ENCODE measurements at regions of chr1 and their contacts with region 1.

Region 1: DNA sequence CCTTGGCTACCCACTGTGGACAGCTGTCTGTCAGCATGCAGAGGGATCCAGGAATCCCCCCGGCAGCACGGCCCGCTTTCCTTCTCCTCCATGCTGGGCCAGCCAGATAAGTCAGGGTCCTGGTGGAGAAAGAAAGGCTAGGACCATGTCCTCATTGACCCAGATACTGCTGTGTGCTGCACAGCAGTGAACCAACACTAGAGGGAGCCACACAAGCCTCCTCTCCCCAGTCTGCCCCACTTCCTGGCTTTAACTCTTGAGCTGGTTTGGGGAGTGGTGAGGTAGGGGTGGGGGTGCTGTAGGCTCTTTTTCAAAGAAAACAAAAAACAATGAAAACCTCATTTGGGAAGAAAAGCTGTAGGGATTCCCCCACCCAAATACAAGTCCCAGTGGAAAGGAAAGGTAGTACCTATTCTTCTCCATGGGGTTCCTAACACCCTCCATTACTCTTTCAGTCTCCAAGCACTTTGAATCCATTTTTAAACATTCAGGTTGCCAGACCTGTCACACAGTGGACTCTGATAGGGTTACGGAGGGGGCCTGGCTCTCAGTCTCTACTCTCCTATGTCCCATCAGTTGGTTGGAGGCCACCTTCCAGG is 84.9 kb upstream of the CD1D start:
- ATAC-seq: peak in 3 of 8 experiments; percentile 81 to 89 (median 82)
- H3K4me3 ChIP-seq: no peak overlapping the region
- H3K27ac ChIP-seq: no peak overlapping the region
- H3K4me1 ChIP-seq: peaks cover 24 to 35% of the 10 kb centered on the region in 2 donors

Region 2: DNA sequence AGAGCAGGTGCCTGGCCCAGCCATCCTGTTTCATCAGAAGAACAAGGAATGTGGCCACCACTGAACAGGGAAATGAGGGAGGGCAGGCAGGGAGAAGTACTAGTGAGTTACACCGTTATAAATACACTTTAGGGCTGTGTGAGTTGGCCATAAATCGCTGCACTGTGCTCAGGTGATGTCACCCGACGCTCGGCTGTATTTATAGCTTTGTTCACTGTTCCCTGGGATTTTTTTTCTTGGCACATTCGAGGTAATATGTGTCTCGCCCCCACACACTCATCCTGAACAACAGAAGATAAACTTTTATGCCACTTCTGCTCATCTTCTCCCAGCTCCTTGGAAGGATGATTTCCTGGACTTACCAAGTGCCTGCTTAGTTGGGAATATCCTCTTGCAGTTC is 111.4 kb before region 1 on chr1:
- in situ Hi-C with region 1: loop called in 4 of 9 experiments (anchors 10 to 25 kb)
- ATAC-seq: peak in 5 of 8 experiments; percentile 99 to 100 (median 100)
- H3K4me3 ChIP-seq: no peak overlapping the region
- H3K27ac ChIP-seq: no peak overlapping the region
- H3K4me1 ChIP-seq: peaks cover 27 to 28% of the 10 kb centered on the region in 2 donors

Region 3: GRCh38 chr1:158013840-158014730 is 81.8 kb before region 1 on chr1:
- in situ Hi-C with region 1: no loop called
- ATAC-seq: peak in 5 of 8 experiments; percentile 46 to 70 (median 55)
- H3K4me3 ChIP-seq: peak overlapping the region in 4 of 5 donors; percentile 2 to 23 (median 10)
- H3K27ac ChIP-seq: peak overlapping the region in 1 of 2 donors; percentile 11
- H3K4me1 ChIP-seq: peaks cover 50 to 67% of the 10 kb centered on the region in 2 donors

Measured in motor neuron (in vitro differentiated cells).